WTC11 (cell line): ENCODE measurements at regions of chr16 and their contacts with region 1.

Region 1: GRCh38 chr16:3158471-3159314 is 23.9 kb downstream of the ZNF213 start:
- DNase-seq: peak; percentile 87
- ATAC-seq: peak; percentile 52
- H3K4me3 Mint-ChIP-seq: peak overlapping the region; percentile 91
- H3K27ac Mint-ChIP-seq: peak overlapping the region; percentile 88
- H3K4me1 Mint-ChIP-seq: peaks cover 6% of the 10 kb centered on the region
- H3K27me3 Mint-ChIP-seq: peaks cover 32% of the 10 kb centered on the region
- CTCF ChIP-seq: no peak

Region 2: GRCh38 chr16:3182608-3183444 is 24.1 kb after region 1 on chr16:
- CTCF ChIA-PET with region 1: interaction called, 17 read pairs
- POLR2A ChIA-PET with region 1: interaction called, 3 read pairs
- DNase-seq: peak; percentile 85
- ATAC-seq: peak; percentile 23
- H3K4me3 Mint-ChIP-seq: peak overlapping the region; percentile 98
- H3K27ac Mint-ChIP-seq: 0 out of 2 replicates have a peak overlapping the region, but pooled peaks have one; percentile 65
- H3K4me1 Mint-ChIP-seq: peaks cover 19% of the 10 kb centered on the region
- H3K27me3 Mint-ChIP-seq: peaks cover 59% of the 10 kb centered on the region
- CTCF ChIP-seq: no peak